ENCODE measurements at regions of chr2 and their contacts with region 1.

Region 1: GRCh38 chr2:206766057-206766930 is 888 bp downstream of the FASTKD2 start:
- DNase-seq: no peak
- ATAC-seq: no peak
- H3K4me3 ChIP-seq: peak overlapping the region; percentile 71 to 99
- H3K27ac ChIP-seq: peak overlapping the region; percentile 96
- H3K4me1 ChIP-seq: peaks cover 4% of the 10 kb centered on the region
- H3K27me3 ChIP-seq: peaks cover 10% of the 10 kb centered on the region
- CTCF ChIP-seq: no peak

Region 2: DNA sequence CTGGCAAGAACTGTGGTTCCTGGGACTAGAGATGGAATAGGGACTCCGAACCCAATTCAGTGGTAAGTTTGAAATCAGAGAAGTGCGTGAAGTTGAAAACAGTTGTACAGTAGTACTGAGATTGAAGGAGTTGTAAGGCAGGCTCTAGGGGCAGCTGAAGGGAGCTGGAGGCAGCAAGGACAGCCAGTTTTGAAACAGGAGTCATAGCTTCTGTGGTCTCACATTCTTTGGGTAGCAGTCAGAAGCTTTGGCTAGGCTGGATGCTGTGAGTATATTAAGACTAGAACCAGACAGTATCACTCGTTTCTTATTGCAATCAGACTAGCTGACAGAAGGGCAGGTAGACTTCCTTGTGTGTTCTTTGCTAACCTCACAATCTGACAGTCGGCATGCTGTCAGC is 387.5 kb before region 1 on chr2:
- CTCF ChIA-PET with region 1: no interaction called
- POLR2A ChIA-PET with region 1: no interaction called
- in situ Hi-C with region 1: no loop called
- intact Hi-C with region 1: no loop called
- DNase-seq: no peak
- ATAC-seq: no peak
- H3K4me3 ChIP-seq: no peak overlapping the region
- H3K27ac ChIP-seq: no peak overlapping the region
- H3K4me1 ChIP-seq: no peaks in the 10 kb centered on the region
- H3K27me3 ChIP-seq: no peaks in the 10 kb centered on the region
- CTCF ChIP-seq: no peak

Region 3: DNA sequence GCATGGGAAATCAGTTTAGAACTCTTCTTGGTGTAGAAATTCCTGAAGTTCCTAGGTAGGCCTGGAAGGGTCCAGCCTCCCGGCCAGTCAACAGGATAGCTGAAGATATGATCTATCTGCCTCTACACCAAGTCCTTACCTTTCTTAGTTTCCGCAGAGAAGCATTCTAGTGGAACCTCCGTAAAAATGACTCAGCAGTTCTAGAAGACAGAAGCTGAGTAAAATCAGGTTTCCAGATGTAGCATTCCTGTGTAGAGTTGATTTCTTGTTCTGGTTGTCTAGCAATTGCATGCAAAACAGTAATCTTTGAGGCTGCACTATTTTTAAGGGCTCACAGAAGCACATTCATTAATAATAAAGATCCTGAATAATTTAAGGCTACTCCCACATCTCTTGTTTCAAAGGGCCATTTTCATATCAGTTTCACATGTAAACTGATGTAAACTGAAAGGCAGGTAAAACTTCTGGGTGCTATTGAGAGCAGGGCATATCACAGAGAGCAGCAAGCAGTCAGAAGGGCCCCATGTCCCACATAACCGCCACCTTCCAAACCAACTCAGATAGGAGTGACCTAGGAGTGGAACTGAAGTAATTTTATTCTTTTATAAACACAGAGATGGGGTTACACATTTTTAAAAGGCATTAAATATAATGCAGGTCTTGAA is 44.9 kb before region 1 on chr2:
- CTCF ChIA-PET with region 1: no interaction called
- POLR2A ChIA-PET with region 1: interaction called, 17 read pairs
- in situ Hi-C with region 1: no loop called
- intact Hi-C with region 1: no loop called
- DNase-seq: no peak
- ATAC-seq: no peak
- H3K4me3 ChIP-seq: no peak overlapping the region
- H3K27ac ChIP-seq: no peak overlapping the region
- H3K4me1 ChIP-seq: no peaks in the 10 kb centered on the region
- H3K27me3 ChIP-seq: no peaks in the 10 kb centered on the region
- CTCF ChIP-seq: no peak

Measured in Panc1 (cell line).